Prostate gland (tissue), 2 donors: ENCODE measurements at regions of chr21 and their contacts with region 1.

Region 1: GRCh38 chr21:39715804-39716397 is 29.1 kb upstream of the IGSF5 start:
- DNase-seq: peak; percentile 45
- H3K4me3 ChIP-seq: no peak overlapping the region
- H3K27ac ChIP-seq: no peak overlapping the region
- H3K4me1 ChIP-seq: no peaks in the 10 kb centered on the region
- H3K27me3 ChIP-seq: no peaks in the 10 kb centered on the region
- CTCF ChIP-seq: peak; percentile 39 to 80 (median 56)
- POLR2A ChIP-seq: no peak

Region 2: GRCh38 chr21:39518138-39518846 is 197.6 kb before region 1 on chr21:
- intact Hi-C with region 1: loop called (anchors 2 kb)
- DNase-seq: peak; percentile 40
- H3K4me3 ChIP-seq: no peak overlapping the region
- H3K27ac ChIP-seq: no peak overlapping the region
- H3K4me1 ChIP-seq: no peaks in the 10 kb centered on the region
- H3K27me3 ChIP-seq: no peaks in the 10 kb centered on the region
- CTCF ChIP-seq: peak; percentile 77 to 84 (median 82)
- POLR2A ChIP-seq: no peak

Region 3: DNA sequence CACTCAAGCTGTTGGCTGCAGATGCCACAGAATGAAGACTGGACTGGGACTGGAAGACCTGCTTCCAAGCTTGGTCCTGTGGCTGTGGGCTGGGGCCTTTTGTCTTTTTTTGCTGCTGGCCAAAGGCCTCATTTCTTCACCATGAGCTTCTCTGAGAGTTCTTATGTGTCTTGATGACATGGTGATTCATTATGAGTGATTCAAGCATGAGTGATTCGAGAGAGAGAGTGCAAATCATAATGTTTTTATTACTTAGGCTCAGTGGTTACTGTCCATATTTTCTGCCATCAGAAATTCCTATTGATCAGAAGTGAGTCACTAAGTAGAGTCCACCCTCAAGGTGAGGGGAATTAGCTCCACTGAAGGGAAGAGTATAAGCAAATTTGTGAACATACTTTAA is 245.3 kb after region 1 on chr21:
- intact Hi-C with region 1: no loop called
- DNase-seq: no peak
- H3K4me3 ChIP-seq: no peak overlapping the region
- H3K27ac ChIP-seq: no peak overlapping the region
- H3K4me1 ChIP-seq: no peaks in the 10 kb centered on the region
- H3K27me3 ChIP-seq: no peaks in the 10 kb centered on the region
- CTCF ChIP-seq: no peak
- POLR2A ChIP-seq: no peak